ENCODE measurements at regions of chr2 and their contacts with region 1.

Region 1: GRCh38 chr2:230712443-230713330 is at the start of gene CAB39:
- DNase-seq: peak; percentile 95
- ATAC-seq: peak; percentile 91
- H3K4me3 Mint-ChIP-seq: peak within 1 kb of the TSS; percentile 94
- H3K27ac Mint-ChIP-seq: peak within 1 kb of the TSS; percentile 93
- H3K4me1 Mint-ChIP-seq: peaks cover 48% of the 10 kb centered on the region
- H3K27me3 Mint-ChIP-seq: no peaks in the 10 kb centered on the region
- CTCF ChIP-seq: no peak
- total RNA-seq, gene CAB39: 60.1 and 68.6 TPM in 2 replicates

Region 2: GRCh38 chr2:230007931-230008707 is 704.6 kb before region 1 on chr2:
- CTCF ChIA-PET with region 1: no interaction called
- POLR2A ChIA-PET with region 1: no interaction called
- intact Hi-C with region 1: loop called (anchors 2 kb)
- DNase-seq: peak; percentile 63
- ATAC-seq: peak; percentile 75
- H3K4me3 Mint-ChIP-seq: no peak overlapping the region
- H3K27ac Mint-ChIP-seq: no peak overlapping the region
- H3K4me1 Mint-ChIP-seq: peaks cover 3% of the 10 kb centered on the region
- H3K27me3 Mint-ChIP-seq: no peaks in the 10 kb centered on the region
- CTCF ChIP-seq: peak; percentile 54

Region 3: GRCh38 chr2:230225486-230225885 is 487.2 kb before region 1 on chr2 and contains the start of gene SP140:
- CTCF ChIA-PET with region 1: no interaction called
- POLR2A ChIA-PET with region 1: interaction called, 12 read pairs
- intact Hi-C with region 1: loop called (anchors 2 kb)
- DNase-seq: peak; percentile 55
- ATAC-seq: peak; percentile 74
- H3K4me3 Mint-ChIP-seq: peak within 1 kb of the TSS; percentile 92
- H3K27ac Mint-ChIP-seq: peak within 1 kb of the TSS; percentile 98
- H3K4me1 Mint-ChIP-seq: peaks cover 86% of the 10 kb centered on the region
- H3K27me3 Mint-ChIP-seq: no peaks in the 10 kb centered on the region
- CTCF ChIP-seq: no peak
- total RNA-seq, gene SP140: 295 and 330 TPM in 2 replicates

Region 4: DNA sequence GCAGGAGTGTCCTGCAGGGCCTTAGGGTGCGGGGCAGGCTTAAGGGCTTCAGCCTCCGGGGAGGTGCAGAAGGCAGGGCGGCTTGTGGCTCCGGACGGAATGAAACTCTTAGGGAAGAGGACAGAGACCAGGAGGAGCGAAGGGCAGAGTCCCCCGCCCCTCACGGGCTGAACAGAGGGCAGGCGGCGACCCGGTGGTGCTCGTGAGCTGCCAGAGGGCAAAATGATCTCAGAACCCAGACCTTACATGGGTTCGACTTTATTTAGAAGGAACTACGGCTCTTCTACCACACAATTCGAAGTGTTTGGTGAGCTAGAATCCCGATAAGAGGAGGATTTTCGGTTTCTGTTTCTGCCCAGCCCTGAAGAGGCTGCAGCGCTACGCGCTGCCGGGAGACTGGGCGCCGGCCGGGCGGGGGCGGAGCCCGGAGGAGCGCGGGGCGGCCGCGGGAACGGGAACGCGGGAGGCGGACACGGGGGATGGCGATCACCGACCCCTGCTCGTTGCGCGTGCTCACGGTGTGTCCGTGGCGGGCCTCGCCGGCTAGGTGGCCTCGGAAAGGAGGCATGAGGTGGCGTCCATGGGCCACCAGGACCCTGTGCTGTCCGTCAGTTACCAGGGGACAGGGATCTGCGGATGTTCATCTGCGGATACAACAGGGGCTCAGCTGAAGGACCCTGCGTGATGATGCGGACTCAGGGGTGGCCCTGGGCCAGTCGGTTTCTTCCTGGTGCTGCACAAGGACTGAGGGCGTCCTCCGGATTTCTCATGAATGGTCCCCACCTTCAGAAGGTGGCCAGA is 300.9 kb before region 1 on chr2:
- CTCF ChIA-PET with region 1: no interaction called
- POLR2A ChIA-PET with region 1: no interaction called
- intact Hi-C with region 1: loop called (anchors 5 kb)
- DNase-seq: peak; percentile 61
- ATAC-seq: peak; percentile 67
- H3K4me3 Mint-ChIP-seq: peak overlapping the region; percentile 99
- H3K27ac Mint-ChIP-seq: peak overlapping the region; percentile 99
- H3K4me1 Mint-ChIP-seq: peaks cover 74% of the 10 kb centered on the region
- H3K27me3 Mint-ChIP-seq: no peaks in the 10 kb centered on the region
- CTCF ChIP-seq: no peak

Region 5: GRCh38 chr2:230668184-230668938 is 44.3 kb before region 1 on chr2:
- CTCF ChIA-PET with region 1: no interaction called
- POLR2A ChIA-PET with region 1: interaction called, 3 read pairs
- intact Hi-C with region 1: loop called (anchors 2 kb)
- DNase-seq: no peak
- ATAC-seq: peak; percentile 43
- H3K4me3 Mint-ChIP-seq: peak overlapping the region; percentile 29
- H3K27ac Mint-ChIP-seq: peak overlapping the region; percentile 67
- H3K4me1 Mint-ChIP-seq: peaks cover 59% of the 10 kb centered on the region
- H3K27me3 Mint-ChIP-seq: no peaks in the 10 kb centered on the region
- CTCF ChIP-seq: no peak

Region 6: DNA sequence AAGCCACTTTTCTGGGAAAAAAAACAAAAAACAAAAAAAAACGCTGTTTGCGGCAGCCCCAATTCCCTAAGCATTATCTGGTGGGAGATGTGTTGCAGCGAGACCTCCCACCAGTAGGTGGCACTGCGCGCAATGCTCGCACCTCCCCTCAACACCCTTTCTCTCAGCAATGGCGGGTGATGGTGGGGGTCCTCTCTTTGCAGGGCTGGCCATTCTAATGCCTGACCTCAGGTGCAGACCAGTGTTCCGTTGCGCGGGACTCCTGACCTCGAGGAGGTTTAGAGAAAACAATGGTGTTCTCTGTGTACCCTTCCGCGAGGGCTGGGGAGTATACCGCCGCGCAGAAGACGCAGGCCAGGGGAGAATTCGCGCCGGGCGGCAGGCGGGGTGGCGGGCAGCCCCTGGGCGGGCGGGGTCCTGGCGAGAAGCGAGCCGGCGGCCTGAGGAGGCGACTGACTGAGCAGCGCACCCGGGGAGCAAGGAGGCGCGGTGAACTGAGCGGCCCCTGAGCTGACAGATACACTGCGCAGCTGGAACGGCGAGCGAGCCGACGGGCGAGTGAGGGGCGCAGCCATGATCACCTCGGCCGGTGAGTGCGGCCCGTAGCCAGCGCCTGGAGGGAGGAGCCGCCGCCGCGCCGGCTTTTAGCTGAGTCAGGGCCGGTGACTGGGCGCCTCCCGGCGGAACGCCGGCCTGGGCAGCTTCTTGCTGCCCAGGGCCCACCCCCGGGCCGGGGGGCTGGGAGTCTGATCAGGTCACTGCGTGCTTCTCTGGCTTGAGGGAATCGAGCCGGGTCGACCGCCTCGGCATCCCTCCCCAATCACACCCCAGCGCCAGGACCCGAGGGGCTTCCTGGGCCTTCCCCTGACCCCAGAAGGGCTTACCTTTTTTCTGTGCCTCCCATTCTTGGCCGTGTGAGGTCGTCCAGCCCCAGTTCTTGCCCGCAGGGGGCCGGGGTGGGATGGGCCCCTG is 344.1 kb after region 1 on chr2 and contains the start of gene PSMD1:
- CTCF ChIA-PET with region 1: no interaction called
- POLR2A ChIA-PET with region 1: no interaction called
- intact Hi-C with region 1: loop called (anchors 2 kb)
- DNase-seq: peak; percentile 90
- ATAC-seq: peak; percentile 85
- H3K4me3 Mint-ChIP-seq: peak within 1 kb of the TSS; percentile 98
- H3K27ac Mint-ChIP-seq: peak within 1 kb of the TSS; percentile 100
- H3K4me1 Mint-ChIP-seq: peaks cover 43% of the 10 kb centered on the region
- H3K27me3 Mint-ChIP-seq: peaks cover 3% of the 10 kb centered on the region
- CTCF ChIP-seq: peak; percentile 65
- total RNA-seq, gene PSMD1: 99.9 and 105 TPM in 2 replicates

Measured in activated B cell treated with CpG ODN at 0.5 μM for 24 hours (primary cell).